Heart left ventricle (tissue), 16 donors: ENCODE measurements at regions of chr6 and their contacts with region 1.

Region 1: GRCh38 chr6:163180874-163181541 is 233.5 kb upstream of the QKI start:
- DNase-seq: peak; percentile 80 to 87 (median 84)
- ATAC-seq: peak; percentile 93 to 97 (median 96)
- H3K4me3 ChIP-seq: peak overlapping the region in 6 of 12 donors; percentile 13 to 33 (median 16)
- H3K27ac ChIP-seq: peak overlapping the region in 5 of 12 donors; percentile 28 to 56 (median 40)
- H3K4me1 ChIP-seq: peaks cover 0 to 29% (median 13%) of the 10 kb centered on the region in 12 donors
- H3K27me3 ChIP-seq: no peaks in the 10 kb centered on the region
- CTCF ChIP-seq: peak; percentile 75 to 94 (median 90)
- POLR2A ChIP-seq: no peak

Region 2: GRCh38 chr6:162856885-162857284 is 324.1 kb before region 1 on chr6:
- intact Hi-C with region 1: loop called in 1 of 10 experiments (anchors 10 kb)
- DNase-seq: peak in 1 of 5 donors; percentile 40
- ATAC-seq: peak; percentile 74 to 92 (median 88)
- H3K4me3 ChIP-seq: peak overlapping the region in 9 of 12 donors; percentile 10 to 50 (median 35)
- H3K27ac ChIP-seq: peak overlapping the region in 11 of 12 donors; percentile 10 to 75 (median 56)
- H3K4me1 ChIP-seq: peaks cover 0 to 10% (median 0%) of the 10 kb centered on the region in 12 donors
- H3K27me3 ChIP-seq: no peaks in the 10 kb centered on the region
- CTCF ChIP-seq: peak; percentile 33 to 74 (median 56)
- POLR2A ChIP-seq: no peak

Region 3: DNA sequence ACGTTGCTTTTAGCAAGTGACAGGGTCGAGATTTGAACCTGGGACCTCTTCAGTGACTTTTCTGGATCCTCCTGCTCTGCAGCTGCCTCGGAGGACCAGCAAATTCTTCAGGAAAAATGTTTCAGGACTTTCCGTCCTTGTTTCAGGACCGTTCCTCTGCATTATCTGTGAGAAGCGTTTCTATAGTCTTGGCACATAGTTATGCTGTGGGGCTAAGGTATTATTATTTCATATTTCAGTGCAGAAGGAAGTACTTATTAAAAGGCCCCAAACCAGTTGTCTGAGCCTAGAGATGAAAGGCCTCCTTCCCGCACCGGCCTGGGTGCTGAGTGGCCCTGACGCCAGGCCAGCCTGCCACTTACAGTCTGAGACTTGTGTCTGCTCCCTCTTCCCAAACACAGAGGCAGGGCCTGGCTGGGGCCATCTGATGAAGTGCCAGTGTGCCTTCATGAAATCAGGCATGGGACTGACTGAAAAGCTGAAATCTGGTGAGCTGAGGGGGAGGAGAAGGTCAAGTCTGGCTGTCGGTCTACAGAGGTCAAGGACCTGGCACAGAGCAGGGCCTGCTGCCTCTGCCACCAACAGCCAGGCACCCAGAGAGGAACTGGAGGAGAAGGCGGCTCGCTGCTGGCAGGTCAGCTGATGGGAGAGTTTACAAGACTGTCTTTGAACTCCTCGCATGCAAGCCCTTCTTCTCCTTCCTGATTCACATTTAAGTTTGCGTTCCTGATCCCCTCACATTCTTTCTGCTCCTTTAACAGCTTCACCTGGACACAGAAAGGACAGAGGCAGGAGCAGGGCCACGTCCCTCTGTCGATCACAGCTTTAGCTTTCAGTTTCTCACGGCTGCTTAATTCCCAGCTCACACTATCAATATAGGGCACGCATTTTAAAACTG is 224.7 kb after region 1 on chr6:
- intact Hi-C with region 1: loop called in 5 of 10 experiments (anchors 5 to 10 kb)
- DNase-seq: peak; percentile 74 to 86 (median 82)
- ATAC-seq: peak; percentile 83 to 93 (median 92)
- H3K4me3 ChIP-seq: peak overlapping the region; percentile 3 to 55 (median 38)
- H3K27ac ChIP-seq: peak overlapping the region; percentile 71 to 98 (median 88)
- H3K4me1 ChIP-seq: peaks cover 4 to 47% (median 27%) of the 10 kb centered on the region in 12 donors
- H3K27me3 ChIP-seq: no peaks in the 10 kb centered on the region
- CTCF ChIP-seq: no peak
- POLR2A ChIP-seq: no peak

Region 4: DNA sequence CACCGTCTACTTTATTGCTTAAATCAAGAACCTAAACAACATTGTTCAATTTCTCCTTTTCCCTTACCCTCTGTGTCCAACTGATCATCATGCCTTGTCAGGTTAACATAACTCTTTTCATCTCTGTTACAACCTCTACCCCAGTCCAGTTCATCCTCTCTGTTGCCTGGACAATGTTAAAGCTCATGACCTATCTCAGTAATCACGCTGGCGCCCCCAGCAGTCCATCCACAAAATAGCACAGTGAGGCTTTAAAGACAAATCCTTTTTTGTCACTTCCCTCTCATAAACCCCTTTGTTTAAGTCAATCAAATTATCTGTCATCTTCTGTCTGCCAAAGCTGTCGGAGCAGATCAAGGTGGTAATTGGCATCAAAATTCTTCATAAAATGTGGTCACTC is 373.7 kb after region 1 on chr6:
- intact Hi-C with region 1: loop called in 3 of 10 experiments (anchors 10 kb)
- DNase-seq: peak in 3 of 5 donors; percentile 23 to 65 (median 53)
- ATAC-seq: peak in 3 of 4 donors; percentile 46 to 56 (median 48)
- H3K4me3 ChIP-seq: no peak overlapping the region
- H3K27ac ChIP-seq: peak overlapping the region in 2 of 12 donors; percentile 2 to 22
- H3K4me1 ChIP-seq: peaks cover 0 to 57% (median 28%) of the 10 kb centered on the region in 12 donors
- H3K27me3 ChIP-seq: no peaks in the 10 kb centered on the region
- CTCF ChIP-seq: peak; percentile 20 to 59 (median 44)
- POLR2A ChIP-seq: no peak

Region 5: DNA sequence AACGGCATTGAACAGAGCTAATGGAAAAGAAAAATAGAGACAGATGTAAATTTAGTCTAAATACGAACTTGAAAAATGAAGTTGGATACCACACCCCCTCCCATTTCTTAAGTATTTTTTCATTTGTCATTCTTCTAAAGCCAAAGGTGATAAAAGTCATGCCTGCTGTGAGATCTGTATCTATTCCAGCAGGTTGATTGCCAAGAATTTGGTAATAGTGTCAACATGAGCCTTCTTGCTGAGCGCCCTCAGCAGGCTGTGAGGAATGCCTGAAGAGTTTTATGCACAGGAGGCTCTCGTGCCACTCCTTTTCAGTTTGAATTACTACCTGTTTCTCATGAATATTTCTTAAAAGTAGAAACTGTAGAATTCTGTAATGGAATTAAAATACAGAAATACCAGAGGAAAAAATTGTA is 398.9 kb after region 1 on chr6:
- intact Hi-C with region 1: loop called in 3 of 10 experiments (anchors 10 kb)
- DNase-seq: peak in 1 of 5 donors; percentile 29
- ATAC-seq: peak in 3 of 4 donors; percentile 19 to 44 (median 42)
- H3K4me3 ChIP-seq: no peak overlapping the region
- H3K27ac ChIP-seq: peak overlapping the region in 6 of 12 donors; percentile 3 to 60 (median 32)
- H3K4me1 ChIP-seq: peaks cover 0 to 38% (median 16%) of the 10 kb centered on the region in 12 donors
- H3K27me3 ChIP-seq: no peaks in the 10 kb centered on the region
- CTCF ChIP-seq: peak in 5 of 12 donors; percentile 17 to 32 (median 24)
- POLR2A ChIP-seq: no peak

Region 6: DNA sequence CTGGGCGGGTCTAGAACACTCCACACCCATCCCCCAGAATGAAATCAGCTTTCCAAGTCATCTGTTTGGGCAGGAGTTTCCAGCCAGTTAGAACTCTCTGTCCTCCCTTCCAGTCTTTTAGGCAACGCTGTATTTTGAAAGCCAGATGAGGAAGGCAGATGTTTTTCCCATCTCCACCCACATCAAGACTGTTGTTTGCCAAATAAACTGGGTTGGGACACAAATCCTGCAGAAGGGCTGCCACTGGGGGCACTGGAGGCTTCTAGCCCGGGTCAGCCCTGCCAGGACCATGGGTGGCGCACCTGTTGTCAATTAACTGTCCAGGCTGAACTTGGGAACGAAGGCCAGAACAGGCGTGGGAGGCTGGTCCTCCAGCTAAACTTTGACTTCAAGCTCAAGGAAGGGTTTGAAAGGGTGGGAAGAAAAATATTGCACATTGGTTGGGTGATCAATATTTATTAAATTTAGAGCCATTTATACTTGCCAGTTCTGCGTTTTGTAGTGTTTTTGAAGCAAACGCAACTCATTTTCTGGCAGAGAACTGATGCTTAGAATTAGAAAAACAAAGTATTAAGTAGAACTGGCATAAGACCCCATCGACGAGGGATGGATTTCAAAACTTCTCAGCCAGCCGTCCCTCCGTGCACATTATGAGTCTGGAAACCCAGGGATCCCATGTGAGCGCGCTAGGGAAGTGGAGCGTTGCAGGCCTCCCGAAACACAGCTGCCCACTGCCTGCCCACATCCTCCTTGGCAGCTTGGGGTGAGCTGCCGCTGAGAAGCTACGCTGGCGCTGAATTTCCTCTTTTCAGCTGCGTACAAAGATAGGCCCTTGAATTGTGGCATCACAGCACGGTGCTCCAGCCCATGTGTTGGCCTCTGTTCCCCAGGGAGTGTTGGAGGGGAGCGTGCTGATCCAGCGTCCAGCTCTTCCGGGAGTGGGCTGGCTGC is 530.9 kb after region 1 on chr6:
- intact Hi-C with region 1: loop called in 1 of 10 experiments (anchors 5 kb)
- DNase-seq: peak; percentile 80 to 91 (median 84)
- ATAC-seq: peak; percentile 71 to 80 (median 77)
- H3K4me3 ChIP-seq: peak overlapping the region in 1 of 12 donors; percentile 12
- H3K27ac ChIP-seq: peak overlapping the region; percentile 67 to 88 (median 78)
- H3K4me1 ChIP-seq: peaks cover 24 to 63% (median 61%) of the 10 kb centered on the region in 12 donors
- H3K27me3 ChIP-seq: no peaks in the 10 kb centered on the region
- CTCF ChIP-seq: peak in 11 of 12 donors; percentile 20 to 59 (median 41)
- POLR2A ChIP-seq: no peak

Region 7: GRCh38 chr6:164927288-164928056 is 1746.5 kb after region 1 on chr6:
- intact Hi-C with region 1: loop called in 7 of 10 experiments (anchors 5 to 10 kb)
- DNase-seq: peak; percentile 61 to 85 (median 61)
- ATAC-seq: peak; percentile 83 to 96 (median 92)
- H3K4me3 ChIP-seq: peak overlapping the region in 3 of 12 donors; percentile 8 to 28 (median 18)
- H3K27ac ChIP-seq: no peak overlapping the region
- H3K4me1 ChIP-seq: peaks cover 0 to 8% (median 2%) of the 10 kb centered on the region in 12 donors
- H3K27me3 ChIP-seq: no peaks in the 10 kb centered on the region
- CTCF ChIP-seq: peak; percentile 93 to 100 (median 98)
- POLR2A ChIP-seq: no peak